Mammary epithelial cell (primary cell): ENCODE measurements at regions of chr21 and their contacts with region 1.

Region 1: GRCh38 chr21:15397258-15397657 is 332.5 kb upstream of the NRIP1 start:
- DNase-seq: no peak
- H3K4me3 ChIP-seq: no peak overlapping the region
- H3K27ac ChIP-seq: no peak overlapping the region
- H3K4me1 ChIP-seq: peaks cover 7% of the 10 kb centered on the region
- H3K27me3 ChIP-seq: no peaks in the 10 kb centered on the region
- CTCF ChIP-seq: no peak

Region 2: GRCh38 chr21:15355066-15355465 is 42.2 kb before region 1 on chr21:
- CTCF ChIA-PET with region 1: no interaction called
- dilution Hi-C with region 1: no loop called
- in situ Hi-C with region 1: no loop called
- intact Hi-C with region 1: no loop called
- DNase-seq: no peak
- H3K4me3 ChIP-seq: no peak overlapping the region
- H3K27ac ChIP-seq: no peak overlapping the region
- H3K4me1 ChIP-seq: no peaks in the 10 kb centered on the region
- H3K27me3 ChIP-seq: no peaks in the 10 kb centered on the region
- CTCF ChIP-seq: no peak

Region 3: GRCh38 chr21:15430577-15430976 is 33.3 kb after region 1 on chr21:
- CTCF ChIA-PET with region 1: no interaction called
- dilution Hi-C with region 1: loop called (anchors 5 kb)
- in situ Hi-C with region 1: no loop called
- intact Hi-C with region 1: no loop called
- DNase-seq: no peak
- H3K4me3 ChIP-seq: no peak overlapping the region
- H3K27ac ChIP-seq: no peak overlapping the region
- H3K4me1 ChIP-seq: peaks cover 8% of the 10 kb centered on the region
- H3K27me3 ChIP-seq: no peaks in the 10 kb centered on the region
- CTCF ChIP-seq: no peak